Right ventricle myocardium superior (tissue), 1 donor: ENCODE measurements at regions of chr11 and their contacts with region 1.

Region 1: DNA sequence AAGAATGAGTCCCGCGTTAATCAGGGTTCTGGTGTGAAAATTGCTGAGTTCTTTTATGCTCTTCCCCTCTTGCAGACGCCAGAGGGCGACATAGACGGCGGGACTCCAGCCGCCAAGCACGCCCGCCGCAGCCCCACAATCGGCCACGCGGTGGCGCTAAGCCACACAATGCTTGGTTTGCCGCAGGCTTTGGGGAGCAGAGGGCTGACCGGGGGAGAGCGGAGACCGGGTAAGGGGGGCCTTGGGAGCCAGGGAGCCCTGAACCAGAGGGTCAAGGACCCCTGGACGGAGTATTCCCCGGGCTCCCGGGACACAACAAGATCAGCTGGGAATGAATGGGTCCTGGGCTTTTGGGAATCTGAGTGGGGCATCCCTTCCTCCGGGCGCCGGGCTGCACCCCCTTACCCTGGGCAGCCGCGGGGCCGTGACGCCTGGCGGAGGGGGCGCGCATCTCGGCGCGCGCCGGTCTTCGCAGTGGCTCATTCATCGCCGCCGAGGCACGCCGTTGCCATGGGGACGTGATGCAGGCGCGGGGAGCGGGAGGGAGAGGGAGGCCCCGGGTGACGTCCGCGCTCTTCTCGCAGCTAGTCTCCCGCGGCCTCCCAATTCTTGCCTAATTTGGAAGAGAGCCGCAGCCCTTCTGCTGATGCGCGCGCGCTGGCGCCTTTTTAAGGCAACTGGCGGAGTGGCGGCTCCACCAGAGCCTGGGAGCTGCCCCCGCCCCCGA is 12.2 kb upstream of the NPAS4 start:
- DNase-seq: peak; percentile 94
- ATAC-seq: peak; percentile 97

Region 2: GRCh38 chr11:66429983-66430602 is 21.4 kb after region 1 on chr11:
- intact Hi-C with region 1: loop called (anchors 1 kb)
- DNase-seq: peak; percentile 81
- ATAC-seq: peak; percentile 89